Activated CD4-positive, alpha-beta memory T cell treated with anti-CD3 and anti-CD28 coated beads for 36 hours (primary cell): ENCODE measurements at regions of chr7 and their contacts with region 1.

Region 1: GRCh38 chr7:87345166-87345927 is at the start of gene CROT:
- DNase-seq: peak; percentile 97
- H3K4me3 Mint-ChIP-seq: peak within 1 kb of the TSS; percentile 99
- H3K27ac Mint-ChIP-seq: peak within 1 kb of the TSS; percentile 95
- H3K4me1 Mint-ChIP-seq: peaks cover 28% of the 10 kb centered on the region
- H3K27me3 Mint-ChIP-seq: no peaks in the 10 kb centered on the region
- total RNA-seq, gene CROT: 8.5 to 9.6 TPM

Region 2: GRCh38 chr7:86939197-86939814 is 406.0 kb before region 1 on chr7:
- CTCF ChIA-PET with region 1: no interaction called
- POLR2A ChIA-PET with region 1: no interaction called
- intact Hi-C with region 1: loop called (anchors 10 kb)
- DNase-seq: no peak
- H3K4me3 Mint-ChIP-seq: no peak overlapping the region
- H3K27ac Mint-ChIP-seq: no peak overlapping the region
- H3K4me1 Mint-ChIP-seq: no peaks in the 10 kb centered on the region
- H3K27me3 Mint-ChIP-seq: no peaks in the 10 kb centered on the region

Region 3: GRCh38 chr7:87328281-87328680 is 17.1 kb before region 1 on chr7:
- CTCF ChIA-PET with region 1: no interaction called
- POLR2A ChIA-PET with region 1: no interaction called
- intact Hi-C with region 1: no loop called
- DNase-seq: no peak
- H3K4me3 Mint-ChIP-seq: no peak overlapping the region
- H3K27ac Mint-ChIP-seq: no peak overlapping the region
- H3K4me1 Mint-ChIP-seq: no peaks in the 10 kb centered on the region
- H3K27me3 Mint-ChIP-seq: no peaks in the 10 kb centered on the region

Region 4: GRCh38 chr7:87369216-87369615 is 23.9 kb after region 1 on chr7:
- CTCF ChIA-PET with region 1: no interaction called
- POLR2A ChIA-PET with region 1: interaction called, 3 read pairs
- intact Hi-C with region 1: loop called (anchors 1 kb)
- DNase-seq: peak; percentile 37
- H3K4me3 Mint-ChIP-seq: no peak overlapping the region
- H3K27ac Mint-ChIP-seq: no peak overlapping the region
- H3K4me1 Mint-ChIP-seq: peaks cover 5% of the 10 kb centered on the region
- H3K27me3 Mint-ChIP-seq: no peaks in the 10 kb centered on the region

Region 5: DNA sequence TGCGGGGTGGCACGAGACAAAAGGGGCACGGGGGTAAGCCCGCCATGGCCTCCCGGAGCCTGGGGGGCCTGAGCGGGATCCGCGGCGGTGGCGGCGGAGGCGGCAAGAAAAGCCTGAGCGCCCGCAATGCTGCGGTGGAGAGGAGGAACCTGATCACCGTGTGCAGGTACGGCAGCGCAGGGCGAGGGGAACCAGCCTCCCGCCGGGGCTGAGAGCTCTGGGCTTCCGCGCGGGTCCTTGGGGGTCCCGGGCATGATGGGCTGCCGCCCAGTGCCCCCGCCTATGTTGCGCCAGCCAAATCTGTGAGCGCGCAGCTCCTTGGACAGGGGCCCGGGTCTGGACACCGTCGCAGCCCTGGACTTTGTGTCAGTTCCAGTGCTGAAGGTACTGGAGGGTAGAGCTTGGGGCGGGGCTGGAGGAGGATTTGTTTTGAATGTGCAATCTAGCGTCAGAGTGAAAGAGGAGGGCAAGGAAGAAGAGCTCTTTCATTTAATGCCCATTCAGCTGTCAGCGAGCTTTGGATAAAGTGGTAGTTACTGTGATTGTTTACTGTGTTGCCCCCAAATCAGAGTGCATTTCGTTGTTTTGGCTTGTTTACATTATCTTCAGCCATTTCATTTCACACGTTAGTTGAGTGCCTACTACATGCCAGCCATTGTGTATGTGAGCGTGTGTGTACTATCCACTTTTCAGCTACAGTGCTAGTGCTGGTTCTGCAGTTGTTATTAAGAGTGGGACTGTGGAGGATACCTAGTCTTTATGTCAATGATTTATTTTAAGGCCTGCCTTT is 283.6 kb after region 1 on chr7:
- CTCF ChIA-PET with region 1: no interaction called
- POLR2A ChIA-PET with region 1: no interaction called
- intact Hi-C with region 1: loop called (anchors 10 kb)
- DNase-seq: peak; percentile 35
- H3K4me3 Mint-ChIP-seq: peak overlapping the region; percentile 74
- H3K27ac Mint-ChIP-seq: no peak overlapping the region
- H3K4me1 Mint-ChIP-seq: peaks cover 9% of the 10 kb centered on the region
- H3K27me3 Mint-ChIP-seq: peaks cover 14% of the 10 kb centered on the region

Region 6: GRCh38 chr7:87933945-87934698 is 588.8 kb after region 1 on chr7 and contains the start of gene ADAM22:
- CTCF ChIA-PET with region 1: no interaction called
- POLR2A ChIA-PET with region 1: no interaction called
- intact Hi-C with region 1: loop called (anchors 1 kb)
- DNase-seq: peak; percentile 89
- H3K4me3 Mint-ChIP-seq: peak within 1 kb of the TSS; percentile 81
- H3K27ac Mint-ChIP-seq: no peak within 1 kb of the TSS
- H3K4me1 Mint-ChIP-seq: peaks cover 9% of the 10 kb centered on the region
- H3K27me3 Mint-ChIP-seq: peaks cover 5% of the 10 kb centered on the region
- total RNA-seq, gene ADAM22: 1.8 to 2.2 TPM